ENCODE measurements at regions of chrX and their contacts with region 1.

Region 1: DNA sequence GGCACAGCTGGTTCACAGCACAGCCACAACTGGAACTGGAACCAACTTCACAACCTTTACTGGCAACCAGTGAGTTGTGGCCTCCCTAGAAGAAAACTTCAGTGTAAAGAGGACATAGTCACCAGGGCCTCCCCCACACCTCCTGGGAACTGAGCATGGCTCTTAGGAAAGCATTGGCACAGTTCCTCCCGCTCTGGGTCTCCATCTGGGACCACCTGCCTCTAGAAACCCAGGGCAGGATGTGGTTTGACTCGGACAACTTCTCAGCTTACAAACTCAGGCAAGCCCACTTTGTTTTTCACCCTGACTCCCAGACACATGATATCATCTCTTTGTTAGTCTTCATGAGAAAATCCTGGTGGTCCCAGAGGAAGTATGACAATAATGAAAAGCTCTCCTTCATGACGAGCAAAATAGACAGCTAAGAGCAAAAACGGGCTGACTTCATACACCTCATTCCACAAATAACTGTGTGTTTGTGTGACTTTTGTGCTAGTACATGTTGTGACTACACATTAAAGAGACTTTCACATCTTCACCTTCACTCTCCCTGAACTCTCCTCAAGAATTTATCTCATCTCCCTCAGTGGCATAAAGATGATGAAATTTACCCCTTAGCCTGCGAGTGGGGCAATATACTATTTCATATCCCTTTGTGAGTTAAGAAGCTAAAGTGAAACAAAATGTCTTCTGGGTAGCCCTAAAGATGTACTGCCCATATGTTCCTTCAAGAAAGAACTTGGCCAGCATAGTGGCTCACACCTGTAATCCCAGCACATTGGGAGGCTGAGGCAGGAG is 75.4 kb downstream of the SH3KBP1 start:
- DNase-seq: peak; percentile 24
- H3K4me3 Mint-ChIP-seq: no peak overlapping the region
- H3K27ac Mint-ChIP-seq: peak overlapping the region; percentile 75
- H3K4me1 Mint-ChIP-seq: peaks cover 55% of the 10 kb centered on the region
- H3K27me3 Mint-ChIP-seq: no peaks in the 10 kb centered on the region

Region 2: DNA sequence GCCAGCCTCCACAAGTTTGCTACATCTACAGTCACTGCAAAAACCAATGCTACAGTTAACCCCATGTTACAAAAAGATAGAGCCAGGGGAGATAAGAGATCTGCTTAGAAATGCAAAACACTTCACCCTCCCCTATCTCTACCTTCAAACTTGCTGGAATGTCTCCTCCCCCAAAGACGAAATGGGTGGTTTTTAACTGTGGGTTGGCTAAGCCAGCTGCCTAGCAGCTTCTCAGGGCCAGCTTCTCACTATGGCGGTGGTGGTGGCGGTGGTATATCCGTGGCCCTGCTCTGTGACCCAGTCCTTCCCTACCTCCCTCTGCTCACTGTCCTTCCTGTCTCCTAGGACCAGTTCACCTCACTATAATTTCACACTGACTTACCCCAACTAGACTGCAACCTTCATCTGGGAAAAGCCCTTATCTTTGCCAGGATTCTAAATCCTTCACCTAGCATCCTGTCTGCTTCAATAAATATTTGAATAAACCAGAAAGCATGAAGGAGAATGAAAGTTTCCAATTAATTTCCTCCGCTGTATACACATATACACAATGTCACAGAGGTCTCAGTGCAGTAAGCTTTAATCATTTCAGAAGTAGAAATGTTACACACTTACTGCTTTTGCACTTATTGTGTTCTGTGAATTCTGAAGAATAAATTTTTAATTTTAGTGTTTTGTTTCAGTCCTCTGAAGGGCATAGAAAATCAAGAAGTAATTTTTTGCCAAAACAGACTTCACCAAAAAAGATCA is 29.1 kb after region 1 on chrX:
- CTCF ChIA-PET with region 1: no interaction called
- POLR2A ChIA-PET with region 1: interaction called, 3 read pairs
- intact Hi-C with region 1: loop called (anchors 2 kb)
- DNase-seq: peak; percentile 63
- H3K4me3 Mint-ChIP-seq: peak overlapping the region; percentile 60
- H3K27ac Mint-ChIP-seq: peak overlapping the region; percentile 98
- H3K4me1 Mint-ChIP-seq: peaks cover 67% of the 10 kb centered on the region
- H3K27me3 Mint-ChIP-seq: no peaks in the 10 kb centered on the region